A673 (cell line): ENCODE measurements at regions of chr4 and their contacts with region 1.

Region 1: DNA sequence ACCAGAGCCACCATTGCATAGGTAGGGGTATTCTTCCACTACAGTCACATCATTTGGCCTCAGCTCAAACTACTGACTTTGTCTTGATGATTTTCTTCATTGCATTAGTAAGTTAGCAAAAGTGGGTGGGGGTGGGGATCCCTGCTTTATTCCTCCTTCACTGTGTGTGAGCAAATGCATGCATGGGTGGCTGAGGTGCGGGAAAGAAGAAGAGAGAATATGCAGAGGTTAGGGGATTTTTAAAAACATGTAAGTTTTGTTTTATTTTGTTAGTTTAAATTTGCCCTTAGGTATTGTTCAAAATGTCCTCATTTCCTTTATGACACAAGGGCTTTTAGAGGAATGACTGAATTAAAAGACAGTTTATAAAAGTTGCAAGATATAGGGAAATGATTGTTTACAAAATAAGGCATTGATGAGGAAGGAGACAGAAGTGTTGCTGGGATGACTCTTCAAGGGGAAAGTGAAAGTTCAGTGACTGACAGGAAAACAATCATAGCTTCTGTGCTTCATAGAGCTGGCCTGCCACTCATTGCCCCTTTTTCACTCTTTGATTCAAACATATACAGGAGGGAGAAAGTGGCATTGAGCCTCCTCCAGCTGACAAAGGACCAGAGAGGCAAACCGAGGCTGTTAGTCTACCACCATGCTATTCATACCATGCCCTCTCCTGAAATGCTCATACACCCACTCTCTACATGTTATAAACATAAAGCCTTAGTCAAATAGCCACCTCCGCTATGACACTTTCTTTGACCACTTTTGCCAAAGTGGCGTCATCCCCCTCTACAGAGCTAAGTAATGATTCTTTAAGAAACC is 79.4 kb upstream of the ATOH1 start:
- DNase-seq: no peak
- H3K4me3 ChIP-seq: no peak overlapping the region
- H3K27ac ChIP-seq: no peak overlapping the region
- H3K4me1 ChIP-seq: no peaks in the 10 kb centered on the region
- H3K27me3 ChIP-seq: no peaks in the 10 kb centered on the region
- CTCF ChIP-seq: no peak

Region 2: GRCh38 chr4:93700571-93700970 is 48.6 kb before region 1 on chr4:
- CTCF ChIA-PET with region 1: interaction called, 10 read pairs
- POLR2A ChIA-PET with region 1: no interaction called
- intact Hi-C with region 1: no loop called
- DNase-seq: no peak
- H3K4me3 ChIP-seq: no peak overlapping the region
- H3K27ac ChIP-seq: no peak overlapping the region
- H3K4me1 ChIP-seq: no peaks in the 10 kb centered on the region
- H3K27me3 ChIP-seq: no peaks in the 10 kb centered on the region
- CTCF ChIP-seq: no peak

Region 3: DNA sequence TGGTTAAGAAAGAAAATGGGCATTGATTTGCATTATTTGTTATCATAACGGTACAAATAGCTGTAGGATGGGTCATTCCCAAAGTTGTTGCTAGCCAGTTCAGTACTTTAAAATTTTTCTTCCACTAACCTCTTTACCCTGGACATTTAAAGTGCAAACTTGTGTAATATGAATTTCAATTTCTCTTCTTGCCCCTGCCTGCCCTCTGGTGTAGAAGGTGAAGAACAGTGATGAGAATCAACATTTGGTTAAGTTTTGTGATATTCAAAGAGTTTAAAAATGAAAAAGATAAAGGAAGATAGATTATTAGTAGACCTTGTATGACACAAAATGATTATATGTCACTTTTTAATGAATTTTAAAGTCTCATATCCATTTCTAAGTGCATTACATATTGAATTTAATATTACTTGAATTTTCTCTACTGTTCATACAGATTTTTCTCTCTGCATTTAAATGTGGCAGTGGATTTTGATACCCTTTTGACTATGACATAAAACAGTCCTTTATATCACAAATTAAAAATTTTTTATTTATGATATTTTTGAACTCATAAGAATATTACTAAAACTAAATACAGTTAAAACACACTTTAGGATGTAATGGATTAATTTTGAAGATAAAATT is 1346.3 kb after region 1 on chr4:
- CTCF ChIA-PET with region 1: no interaction called
- POLR2A ChIA-PET with region 1: no interaction called
- intact Hi-C with region 1: no loop called
- DNase-seq: peak; percentile 63
- H3K4me3 ChIP-seq: no peak overlapping the region
- H3K27ac ChIP-seq: no peak overlapping the region
- H3K4me1 ChIP-seq: peaks cover 26% of the 10 kb centered on the region
- H3K27me3 ChIP-seq: no peaks in the 10 kb centered on the region
- CTCF ChIP-seq: peak; percentile 61